Calu3 (cell line): ENCODE measurements at regions of chr18 and their contacts with region 1.

Region 1: DNA sequence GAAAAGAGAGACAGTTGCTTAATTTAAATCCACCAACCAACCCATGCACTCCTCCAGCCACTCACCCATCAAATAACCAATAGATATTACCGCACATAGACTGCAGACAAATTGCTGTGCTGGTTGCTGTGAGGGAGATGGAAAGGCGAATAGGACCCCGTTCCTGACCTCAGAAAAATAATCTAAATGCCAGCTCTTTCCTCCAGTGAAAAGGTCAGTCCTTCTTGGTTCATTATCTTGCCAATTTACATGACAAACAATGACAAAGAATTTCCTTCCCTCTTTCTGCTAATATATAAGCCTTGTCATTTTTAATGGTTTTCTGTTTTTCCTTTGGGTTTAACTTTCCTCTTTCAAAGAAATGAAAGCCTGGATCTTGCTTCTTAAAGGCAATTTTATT is 61.6 kb downstream of the MEP1B start:
- DNase-seq: no peak
- H3K4me3 Mint-ChIP-seq: no peak overlapping the region
- H3K27ac Mint-ChIP-seq: no peak overlapping the region
- H3K4me1 Mint-ChIP-seq: no peaks in the 10 kb centered on the region
- H3K27me3 Mint-ChIP-seq: no peaks in the 10 kb centered on the region
- CTCF ChIP-seq: no peak

Region 2: GRCh38 chr18:32213693-32214092 is 37.8 kb before region 1 on chr18:
- CTCF ChIA-PET with region 1: no interaction called
- intact Hi-C with region 1: loop called (anchors 1 kb)
- DNase-seq: no peak
- H3K4me3 Mint-ChIP-seq: no peak overlapping the region
- H3K27ac Mint-ChIP-seq: no peak overlapping the region
- H3K4me1 Mint-ChIP-seq: no peaks in the 10 kb centered on the region
- H3K27me3 Mint-ChIP-seq: no peaks in the 10 kb centered on the region
- CTCF ChIP-seq: no peak